ENCODE measurements at regions of chr15 and their contacts with region 1.

Region 1: GRCh38 chr15:85800467-85801123 is 5.9 kb upstream of the KLHL25 start:
- DNase-seq: peak; percentile 78
- ATAC-seq: peak; percentile 98
- H3K4me3 ChIP-seq: no peak overlapping the region
- H3K27ac ChIP-seq: no peak overlapping the region
- H3K4me1 ChIP-seq: peaks cover 15% of the 10 kb centered on the region
- H3K27me3 ChIP-seq: no peaks in the 10 kb centered on the region; a peak in 1 of 5 replicates
- CTCF ChIP-seq: peak; percentile 77
- EP300 ChIP-seq: no peak
- POLR2A ChIP-seq: no peak
- RAD21 ChIP-seq: peak; percentile 60; the same call in 1 of the 2 replicates

Region 2: GRCh38 chr15:85730001-85730820 is 70.4 kb before region 1 on chr15:
- CTCF ChIA-PET with region 1: no interaction called
- POLR2A ChIA-PET with region 1: no interaction called
- in situ Hi-C with region 1: no loop called
- intact Hi-C with region 1: loop called (anchors 1 kb)
- DNase-seq: peak; percentile 53
- ATAC-seq: peak; percentile 86
- H3K4me3 ChIP-seq: no peak overlapping the region
- H3K27ac ChIP-seq: no peak overlapping the region
- H3K4me1 ChIP-seq: no peaks in the 10 kb centered on the region
- H3K27me3 ChIP-seq: no peaks in the 10 kb centered on the region
- CTCF ChIP-seq: peak; percentile 83
- EP300 ChIP-seq: no peak
- POLR2A ChIP-seq: no peak
- RAD21 ChIP-seq: peak; percentile 68